HepG2 (cell line): ENCODE measurements at regions of chr1 and their contacts with region 1.

Region 1: GRCh38 chr1:204506961-204507387 is 9.2 kb upstream of the MDM4 start:
- DNase-seq: peak; percentile 85
- ATAC-seq: peak; percentile 73
- H3K4me3 ChIP-seq: peak overlapping the region; percentile 72 to 84 (median 76)
- H3K27ac ChIP-seq: peak overlapping the region; percentile 72
- H3K4me1 ChIP-seq: peaks cover 48% of the 10 kb centered on the region
- H3K27me3 ChIP-seq: no peaks in the 10 kb centered on the region; a peak in 1 of 5 replicates
- CTCF ChIP-seq: no peak
- EP300 ChIP-seq: peak in 1 of 2 experiments; percentile 37; a peak in 1 of 4 replicates
- POLR2A ChIP-seq: no peak
- RAD21 ChIP-seq: no peak

Region 2: DNA sequence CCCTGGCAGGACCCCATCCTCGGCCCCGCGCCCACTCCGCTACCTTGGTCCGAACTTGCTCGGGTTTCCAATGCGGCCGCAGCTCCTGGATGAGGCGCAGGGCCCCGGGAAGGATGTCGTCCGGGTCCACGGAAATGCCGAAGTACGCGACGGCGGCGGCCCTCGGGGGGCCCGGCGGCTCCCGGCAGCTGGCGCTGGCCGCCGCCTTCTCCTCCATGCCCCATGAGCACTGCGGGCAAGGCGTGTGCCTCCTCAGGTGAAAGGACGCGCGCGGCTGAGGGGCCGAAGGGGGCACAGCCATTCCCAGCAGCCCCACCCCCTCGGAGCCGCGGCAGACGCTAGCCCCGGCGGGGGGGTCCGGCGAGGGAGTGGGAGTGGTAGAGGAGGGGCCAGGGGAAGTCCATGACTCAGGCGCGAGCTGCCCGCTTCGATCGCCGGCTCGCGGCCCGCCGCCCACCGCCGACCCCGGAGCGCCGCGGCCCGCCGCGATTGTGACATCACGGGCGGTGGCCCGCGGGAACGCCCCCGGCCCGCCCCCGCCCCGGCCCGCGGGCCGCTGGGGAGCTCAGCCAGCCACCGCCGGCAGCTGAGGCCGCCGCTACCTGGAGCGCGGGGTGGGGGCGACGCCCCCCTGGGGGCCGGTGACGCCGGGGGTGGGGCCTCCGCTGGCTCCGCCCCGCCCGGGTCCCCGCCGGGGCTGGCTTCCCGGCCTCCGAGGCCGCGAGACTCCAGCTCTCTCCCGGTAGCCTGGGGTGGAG is 355.2 kb before region 1 on chr1 and contains the start of gene ETNK2:
- CTCF ChIA-PET with region 1: no interaction called
- POLR2A ChIA-PET with region 1: no interaction called
- in situ Hi-C with region 1: no loop called
- intact Hi-C with region 1: loop called (anchors 10 kb)
- DNase-seq: no peak
- ATAC-seq: peak; percentile 48
- H3K4me3 ChIP-seq: peak within 1 kb of the TSS; percentile 61 to 82 (median 72)
- H3K27ac ChIP-seq: peak within 1 kb of the TSS; percentile 38
- H3K4me1 ChIP-seq: peaks cover 46% of the 10 kb centered on the region
- H3K27me3 ChIP-seq: peaks cover 0 to 2% of the 10 kb centered on the region in 2 experiments; a peak in 3 of 5 replicates
- CTCF ChIP-seq: no peak; the same call in 1 of the 2 replicates
- EP300 ChIP-seq: no peak
- POLR2A ChIP-seq: peak in 1 of 2 experiments; percentile 65; a peak in 2 of 4 replicates
- RAD21 ChIP-seq: no peak
- total RNA-seq, gene ETNK2: 35.3 and 42.8 TPM in 2 replicates

Region 3: GRCh38 chr1:204411451-204412204 is 95.3 kb before region 1 on chr1 and contains the start of gene PPP1R15B:
- CTCF ChIA-PET with region 1: no interaction called
- POLR2A ChIA-PET with region 1: interaction called, 4 read pairs
- in situ Hi-C with region 1: no loop called
- intact Hi-C with region 1: loop called (anchors 5 kb)
- DNase-seq: peak; percentile 95
- ATAC-seq: peak; percentile 96
- H3K4me3 ChIP-seq: peak within 1 kb of the TSS; percentile 95 to 99 (median 98)
- H3K27ac ChIP-seq: peak within 1 kb of the TSS; percentile 99
- H3K4me1 ChIP-seq: peaks cover 13% of the 10 kb centered on the region
- H3K27me3 ChIP-seq: no peaks in the 10 kb centered on the region; a peak in 1 of 5 replicates
- CTCF ChIP-seq: no peak
- EP300 ChIP-seq: peak; percentile 33 to 57; a peak in 3 of 4 replicates
- POLR2A ChIP-seq: peak; percentile 83 to 90
- RAD21 ChIP-seq: no peak
- total RNA-seq, gene PPP1R15B: 20.1 and 23.8 TPM in 2 replicates

Region 4: DNA sequence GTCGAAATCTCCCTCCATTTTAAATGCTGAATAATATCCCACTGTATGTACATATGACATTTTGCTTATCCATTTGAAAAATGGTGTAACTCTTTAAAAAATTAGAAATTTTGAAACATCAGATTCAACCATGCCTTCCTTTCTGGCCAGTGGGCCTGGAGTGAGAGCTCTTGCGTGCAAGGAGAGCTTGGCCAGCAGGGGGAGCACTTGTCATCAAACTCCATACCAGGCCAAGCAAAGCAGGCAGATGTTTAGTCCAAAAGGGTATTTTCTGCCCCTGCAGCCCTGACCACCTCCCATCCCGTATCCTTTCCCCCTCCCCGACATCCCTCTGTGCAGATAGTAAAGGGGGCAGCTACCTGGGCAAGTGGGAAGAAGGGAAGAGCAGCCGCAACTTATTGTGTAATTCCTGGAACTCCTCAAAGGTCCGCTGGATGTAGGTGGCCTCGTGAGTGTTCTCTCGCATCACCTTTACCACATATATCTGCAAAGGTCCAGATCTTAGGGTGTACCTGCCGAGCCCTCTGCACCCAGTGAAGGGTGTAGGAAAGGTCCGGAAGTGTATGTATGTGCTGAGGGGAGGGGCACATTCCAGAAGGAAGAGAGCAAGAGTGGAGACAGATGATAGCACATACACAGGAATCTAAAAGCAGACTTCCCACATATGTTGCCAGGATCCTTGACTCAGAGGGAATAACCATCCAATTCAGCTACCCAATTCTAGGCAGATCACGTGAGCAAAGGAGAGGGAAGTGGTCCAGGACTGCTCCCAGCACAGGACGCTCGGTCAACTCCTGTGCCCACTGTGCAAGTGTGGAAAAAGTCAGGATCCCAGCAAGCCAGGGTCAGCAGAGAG is 75.4 kb before region 1 on chr1:
- CTCF ChIA-PET with region 1: interaction called, 28 read pairs
- POLR2A ChIA-PET with region 1: interaction called, 7 read pairs
- in situ Hi-C with region 1: no loop called
- intact Hi-C with region 1: loop called (anchors 1 kb)
- DNase-seq: peak; percentile 52
- ATAC-seq: peak; percentile 92
- H3K4me3 ChIP-seq: no peak overlapping the region
- H3K27ac ChIP-seq: no peak overlapping the region
- H3K4me1 ChIP-seq: peaks cover 16% of the 10 kb centered on the region
- H3K27me3 ChIP-seq: no peaks in the 10 kb centered on the region
- CTCF ChIP-seq: peak; percentile 84
- EP300 ChIP-seq: no peak
- POLR2A ChIP-seq: no peak
- RAD21 ChIP-seq: no peak

Region 5: GRCh38 chr1:204446370-204447111 is 60.4 kb before region 1 on chr1:
- CTCF ChIA-PET with region 1: interaction called, 78 read pairs
- POLR2A ChIA-PET with region 1: interaction called, 6 read pairs
- in situ Hi-C with region 1: loop called (anchors 5 kb)
- intact Hi-C with region 1: loop called (anchors 1 kb)
- DNase-seq: peak; percentile 55
- ATAC-seq: peak; percentile 94
- H3K4me3 ChIP-seq: no peak overlapping the region
- H3K27ac ChIP-seq: no peak overlapping the region
- H3K4me1 ChIP-seq: peaks cover 12% of the 10 kb centered on the region
- H3K27me3 ChIP-seq: no peaks in the 10 kb centered on the region
- CTCF ChIP-seq: peak; percentile 82
- EP300 ChIP-seq: no peak
- POLR2A ChIP-seq: no peak
- RAD21 ChIP-seq: peak; percentile 82

Region 6: DNA sequence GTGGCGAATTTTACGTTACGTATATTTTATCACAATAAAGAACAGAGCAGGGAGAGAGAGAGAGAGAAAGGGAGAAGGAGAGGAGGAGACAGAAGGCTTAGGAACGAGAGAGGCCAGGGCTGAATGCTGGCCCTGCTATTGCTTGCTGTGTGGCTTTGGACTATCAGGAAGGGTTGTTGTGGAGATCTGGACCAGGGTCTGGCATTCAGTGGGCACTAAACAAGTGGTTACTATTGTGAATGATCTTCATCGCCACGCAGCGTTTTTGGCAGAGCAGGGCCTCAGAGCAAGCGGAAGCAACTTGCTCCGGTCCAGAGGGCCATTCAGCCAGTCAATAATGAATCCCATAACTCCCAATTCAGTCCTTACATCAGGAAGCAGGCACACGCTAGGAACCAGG is 38.8 kb before region 1 on chr1:
- CTCF ChIA-PET with region 1: no interaction called
- POLR2A ChIA-PET with region 1: no interaction called
- in situ Hi-C with region 1: no loop called
- intact Hi-C with region 1: no loop called
- DNase-seq: no peak
- ATAC-seq: no peak
- H3K4me3 ChIP-seq: no peak overlapping the region
- H3K27ac ChIP-seq: no peak overlapping the region
- H3K4me1 ChIP-seq: no peaks in the 10 kb centered on the region
- H3K27me3 ChIP-seq: no peaks in the 10 kb centered on the region
- CTCF ChIP-seq: no peak
- EP300 ChIP-seq: no peak
- POLR2A ChIP-seq: no peak
- RAD21 ChIP-seq: no peak

Region 7: DNA sequence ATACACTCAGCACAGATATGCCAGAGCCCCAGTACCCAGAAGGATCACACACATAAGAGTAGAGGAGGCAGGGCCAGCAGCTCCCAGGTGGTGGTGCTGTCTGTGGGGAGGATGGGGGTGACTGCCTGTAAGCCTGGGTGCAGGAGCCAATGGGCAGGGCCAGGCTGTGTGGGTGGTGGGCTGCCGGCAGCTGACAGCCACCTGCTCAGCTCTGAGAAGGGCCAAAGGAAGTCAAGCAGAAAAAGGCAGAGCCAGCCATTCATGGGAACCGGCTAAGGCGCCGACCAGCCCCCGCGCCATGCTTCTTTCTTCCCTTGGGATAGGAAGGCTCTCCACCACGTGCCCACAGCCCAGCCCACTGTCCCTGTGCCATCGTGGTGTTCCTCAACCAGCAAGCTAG is 26.5 kb before region 1 on chr1:
- CTCF ChIA-PET with region 1: interaction called, 11 read pairs
- POLR2A ChIA-PET with region 1: no interaction called
- in situ Hi-C with region 1: no loop called
- intact Hi-C with region 1: loop called (anchors 1 kb)
- DNase-seq: no peak
- ATAC-seq: no peak
- H3K4me3 ChIP-seq: no peak overlapping the region
- H3K27ac ChIP-seq: no peak overlapping the region
- H3K4me1 ChIP-seq: peaks cover 29% of the 10 kb centered on the region
- H3K27me3 ChIP-seq: no peaks in the 10 kb centered on the region
- CTCF ChIP-seq: no peak
- EP300 ChIP-seq: no peak
- POLR2A ChIP-seq: no peak
- RAD21 ChIP-seq: no peak

Region 8: DNA sequence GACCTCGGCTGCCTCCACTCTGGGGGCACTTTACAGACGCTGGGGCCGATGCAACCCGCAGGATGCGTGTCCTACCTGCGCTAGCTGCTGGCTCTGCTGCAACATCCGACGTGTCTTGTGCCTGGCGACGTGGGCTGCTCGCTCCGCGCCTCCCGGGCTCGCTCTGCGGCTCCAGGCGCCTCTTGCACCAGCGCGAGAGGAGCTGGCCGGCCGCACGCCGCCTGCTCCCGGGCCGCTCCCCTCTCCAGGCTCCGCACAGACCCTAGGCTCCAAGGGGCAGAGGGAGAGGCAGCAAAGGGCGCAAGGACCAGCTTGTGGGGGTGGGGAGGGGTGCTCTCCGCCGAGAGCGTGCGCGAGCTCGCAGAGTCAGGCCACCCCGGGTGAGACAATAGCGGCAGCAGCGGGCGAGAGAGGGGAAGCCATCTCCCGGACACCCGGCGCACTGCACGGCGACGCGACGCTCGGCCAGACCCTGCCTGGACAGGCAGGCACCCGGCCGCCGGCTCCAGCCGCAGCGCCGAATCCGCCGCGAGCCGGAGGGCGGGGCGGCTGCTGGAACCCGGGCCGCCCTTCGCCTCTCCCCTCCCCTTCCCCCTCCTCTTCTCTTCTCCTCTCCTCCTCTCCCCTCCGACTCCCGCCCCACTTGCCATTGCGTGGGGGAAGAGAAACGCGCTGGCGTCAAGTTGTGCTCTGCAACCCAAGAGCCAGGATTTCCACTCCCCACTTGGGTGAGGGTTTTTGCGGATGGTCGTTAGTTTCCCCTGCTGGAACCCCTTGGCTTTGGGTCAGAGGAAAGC is 12.5 kb before region 1 on chr1 and contains the start of gene PIK3C2B:
- CTCF ChIA-PET with region 1: interaction called, 8 read pairs
- POLR2A ChIA-PET with region 1: interaction called, 25 read pairs
- in situ Hi-C with region 1: no loop called
- intact Hi-C with region 1: no loop called
- DNase-seq: peak; percentile 71
- ATAC-seq: peak; percentile 98
- H3K4me3 ChIP-seq: peak within 1 kb of the TSS; percentile 78 to 93 (median 90)
- H3K27ac ChIP-seq: peak within 1 kb of the TSS; percentile 89
- H3K4me1 ChIP-seq: peaks cover 31% of the 10 kb centered on the region
- H3K27me3 ChIP-seq: peaks cover 0 to 40% of the 10 kb centered on the region in 2 experiments; a peak in 4 of 5 replicates
- CTCF ChIP-seq: peak; percentile 67
- EP300 ChIP-seq: no peak
- POLR2A ChIP-seq: peak; percentile 60 to 68; a peak in 3 of 4 replicates
- RAD21 ChIP-seq: peak; percentile 87
- total RNA-seq, gene PIK3C2B: 2.7 and 3.4 TPM in 2 replicates

Region 9: GRCh38 chr1:204541626-204542025 is 34.7 kb after region 1 on chr1:
- CTCF ChIA-PET with region 1: no interaction called
- POLR2A ChIA-PET with region 1: no interaction called
- in situ Hi-C with region 1: no loop called
- intact Hi-C with region 1: no loop called
- DNase-seq: no peak
- ATAC-seq: no peak
- H3K4me3 ChIP-seq: no peak overlapping the region
- H3K27ac ChIP-seq: no peak overlapping the region
- H3K4me1 ChIP-seq: no peaks in the 10 kb centered on the region
- H3K27me3 ChIP-seq: no peaks in the 10 kb centered on the region; a peak in 1 of 5 replicates
- CTCF ChIP-seq: no peak
- EP300 ChIP-seq: no peak
- POLR2A ChIP-seq: no peak
- RAD21 ChIP-seq: no peak